Dorsolateral prefrontal cortex (tissue), 120 donors: ENCODE measurements at regions of chr11 and their contacts with region 1.

Region 1: GRCh38 chr11:107478922-107479321 is 21.3 kb upstream of the CWF19L2 start:
- DNase-seq: no peak
- H3K4me3 ChIP-seq: no peak overlapping the region
- H3K27ac ChIP-seq: no peak overlapping the region
- H3K27me3 ChIP-seq: peaks cover 0 to 30% (median 4%) of the 10 kb centered on the region in 45 donors
- CTCF ChIP-seq: no peak

Region 2: DNA sequence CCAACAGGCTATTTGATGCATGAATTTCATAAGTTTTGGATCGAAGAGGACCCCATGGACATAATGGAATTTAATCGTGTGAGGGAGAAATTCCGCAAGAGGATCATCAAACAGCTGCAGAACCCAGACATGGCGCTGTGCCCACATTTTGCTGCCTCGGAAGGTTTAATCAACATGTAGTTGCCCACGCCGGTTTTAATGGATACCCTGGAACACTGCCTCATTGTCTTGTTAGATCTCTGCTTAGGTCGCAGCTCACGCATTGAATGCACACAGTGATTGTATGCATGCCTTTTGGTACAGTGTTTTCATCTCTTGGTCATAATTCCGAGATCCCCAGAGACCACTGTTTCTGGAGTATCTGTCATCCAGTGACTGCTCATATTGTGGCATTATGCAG is 186.1 kb after region 1 on chr11:
- intact Hi-C with region 1: loop called in 1 of 2 experiments (anchors 5 kb)
- DNase-seq: peak in 2 of 10 donors; percentile 28 to 41
- H3K4me3 ChIP-seq: peak overlapping the region in 9 of 59 donors; percentile 1 to 33 (median 8)
- H3K27ac ChIP-seq: peak overlapping the region in 3 of 59 donors; percentile 10 to 27 (median 22)
- H3K27me3 ChIP-seq: peaks cover 0 to 24% (median 0%) of the 10 kb centered on the region in 45 donors
- CTCF ChIP-seq: no peak